ENCODE measurements at regions of chr10 and their contacts with region 1.

Region 1: DNA sequence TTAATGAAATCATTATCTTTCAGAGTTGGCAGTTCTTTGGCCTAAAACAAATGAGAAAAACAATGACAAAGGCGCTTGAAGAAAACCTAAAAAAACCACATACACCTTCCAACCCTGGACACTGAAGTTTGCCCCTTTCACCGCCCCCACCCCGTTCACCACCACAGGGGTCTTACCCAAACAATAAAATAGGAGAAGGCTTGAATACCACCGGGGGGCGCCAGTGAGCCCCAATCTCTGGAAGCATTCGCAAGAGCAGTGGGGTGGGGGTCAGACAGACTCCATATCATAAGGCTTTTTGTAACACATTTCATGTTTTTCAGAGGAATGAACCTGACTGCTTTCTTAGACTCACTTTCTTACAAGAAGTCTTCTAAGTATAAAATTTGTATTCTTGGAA is 163.6 kb downstream of the PIP4K2A start:
- DNase-seq: peak; percentile 56 to 72
- H3K4me3 ChIP-seq: no peak overlapping the region
- H3K4me3 Mint-ChIP-seq: no peak overlapping the region
- H3K27ac Mint-ChIP-seq: no peak overlapping the region
- H3K4me1 ChIP-seq: no peaks in the 10 kb centered on the region
- H3K4me1 Mint-ChIP-seq: no peaks in the 10 kb centered on the region
- H3K27me3 ChIP-seq: no peaks in the 10 kb centered on the region
- H3K27me3 Mint-ChIP-seq: no peaks in the 10 kb centered on the region
- CTCF ChIP-seq: peak; percentile 48 to 86

Region 2: DNA sequence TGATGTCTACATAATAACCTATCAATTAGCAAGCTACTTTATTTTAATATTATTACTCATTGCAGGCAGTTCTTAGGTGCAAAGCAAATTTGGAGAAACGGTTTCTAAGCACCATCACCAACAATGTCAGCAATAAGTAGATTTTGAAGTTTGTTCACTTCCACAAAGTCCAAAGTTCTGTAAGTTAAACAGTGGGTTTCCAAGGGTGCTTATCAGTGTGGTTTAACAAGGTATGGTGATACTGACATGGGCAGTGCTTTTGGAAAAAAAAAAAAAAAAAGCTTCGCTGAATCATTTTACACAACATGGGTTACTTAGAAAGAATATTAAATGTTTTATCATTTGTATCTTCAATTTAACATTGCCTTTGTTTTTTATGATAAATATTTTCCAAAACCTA is 103.7 kb before region 1 on chr10:
- CTCF ChIA-PET with region 1: no interaction called
- POLR2A ChIA-PET with region 1: no interaction called
- intact Hi-C with region 1: loop called (anchors 5 kb)
- DNase-seq: peak in 1 of 2 experiments; percentile 73
- H3K4me3 ChIP-seq: no peak overlapping the region
- H3K4me3 Mint-ChIP-seq: no peak overlapping the region
- H3K27ac Mint-ChIP-seq: peak overlapping the region; percentile 51
- H3K4me1 ChIP-seq: peaks cover 47% of the 10 kb centered on the region
- H3K4me1 Mint-ChIP-seq: peaks cover 48% of the 10 kb centered on the region
- H3K27me3 ChIP-seq: no peaks in the 10 kb centered on the region
- H3K27me3 Mint-ChIP-seq: no peaks in the 10 kb centered on the region
- CTCF ChIP-seq: no peak